Breast epithelium (tissue), 4 donors: ENCODE measurements at regions of chrX and their contacts with region 1.

Region 1: DNA sequence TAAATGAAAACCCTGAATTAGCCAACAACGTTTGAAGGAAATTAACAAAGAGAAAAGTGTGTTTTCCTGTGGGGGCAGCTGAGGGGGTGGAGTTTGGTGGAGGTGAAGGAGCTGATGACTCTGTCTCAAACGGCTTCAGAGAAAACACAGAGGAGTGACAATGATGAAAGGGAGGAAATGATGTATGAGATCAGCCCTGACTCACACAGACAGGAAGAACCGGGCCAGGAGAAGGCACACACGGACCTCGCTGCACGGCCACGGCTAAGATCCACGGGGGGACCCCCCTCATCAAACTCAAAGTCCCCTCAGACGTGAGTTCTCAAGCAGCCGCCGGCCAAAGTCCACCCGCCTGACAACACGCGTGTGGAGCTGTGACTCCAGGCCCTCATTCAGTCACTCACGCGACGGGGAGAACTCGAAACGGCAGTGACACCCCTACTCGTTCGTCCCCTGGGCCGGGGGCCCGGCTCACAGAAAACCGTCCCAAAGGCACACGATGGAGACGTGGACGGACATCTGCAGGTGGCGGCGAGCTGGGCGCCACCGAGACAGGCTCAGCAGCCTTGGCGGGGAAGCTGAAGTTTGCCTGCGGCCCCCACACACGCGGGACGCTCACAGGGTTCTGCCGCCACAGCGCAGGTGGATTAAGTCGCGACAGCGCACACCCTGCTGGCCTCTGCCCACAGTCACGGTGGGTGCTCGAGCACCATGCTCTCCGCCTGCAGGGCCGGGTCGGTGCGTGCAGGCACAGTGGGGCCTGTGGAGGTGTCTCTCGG is 28.8 kb downstream of the PPP2R3B start:
- DNase-seq: no peak
- H3K4me3 ChIP-seq: no peak overlapping the region
- H3K27ac ChIP-seq: no peak overlapping the region
- H3K4me1 ChIP-seq: no peaks in the 10 kb centered on the region
- H3K27me3 ChIP-seq: no peaks in the 10 kb centered on the region
- CTCF ChIP-seq: no peak
- POLR2A ChIP-seq: no peak

Region 2: DNA sequence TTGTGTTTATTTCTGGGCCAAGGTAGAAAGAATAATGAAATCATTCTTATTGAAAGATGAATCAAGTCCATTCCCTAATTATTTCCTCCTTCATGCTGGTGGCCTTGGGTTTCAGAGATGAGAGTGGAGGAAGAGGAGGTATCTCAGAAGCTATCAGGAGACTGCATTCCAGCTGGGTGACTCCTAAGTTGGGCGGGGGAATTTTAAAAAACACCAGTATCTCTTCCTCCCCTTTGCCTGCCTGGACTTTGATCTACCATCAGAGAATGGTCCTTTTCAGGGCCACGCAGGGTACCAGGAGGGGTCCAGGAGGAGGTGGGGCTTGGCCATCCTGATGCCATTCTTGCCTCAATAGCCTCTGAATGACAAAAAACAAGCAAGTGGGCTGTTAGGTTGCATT is 1361.4 kb after region 1 on chrX:
- intact Hi-C with region 1: loop called (anchors 5 kb)
- DNase-seq: no peak
- H3K4me3 ChIP-seq: no peak overlapping the region
- H3K27ac ChIP-seq: no peak overlapping the region
- H3K4me1 ChIP-seq: no peaks in the 10 kb centered on the region
- H3K27me3 ChIP-seq: no peaks in the 10 kb centered on the region
- CTCF ChIP-seq: no peak
- POLR2A ChIP-seq: no peak